ENCODE measurements at regions of chr3 and their contacts with region 1.

Region 1: DNA sequence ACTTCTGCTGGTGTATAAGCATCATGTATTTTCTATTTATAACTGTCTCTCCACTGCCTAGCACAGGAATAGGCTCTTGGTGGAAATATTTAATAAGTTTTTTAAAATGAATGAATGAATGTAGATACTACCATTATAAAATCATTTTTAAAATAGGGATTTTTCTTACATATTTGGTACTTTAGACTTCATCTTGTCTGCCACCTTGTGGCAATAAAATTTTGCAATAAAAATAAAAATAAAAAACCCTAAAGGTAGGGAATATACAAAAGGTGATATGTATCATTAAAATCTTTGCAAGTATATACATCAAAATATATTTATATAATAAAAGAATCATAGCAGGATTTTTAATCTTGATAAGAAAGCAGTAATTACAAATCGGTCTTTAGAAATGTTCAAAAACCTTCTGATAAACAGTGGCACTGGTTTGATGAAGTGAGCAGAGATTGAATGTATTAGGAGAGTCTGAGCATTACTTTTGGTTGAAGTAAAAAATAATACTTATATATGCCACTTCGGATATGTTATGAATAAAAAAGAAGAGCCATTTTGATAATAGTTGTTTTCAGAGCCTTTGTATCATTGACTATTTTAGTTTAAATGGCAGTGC is 95.2 kb downstream of the SPATA16 start:
- DNase-seq: no peak
- H3K4me3 ChIP-seq: no peak overlapping the region
- H3K27ac ChIP-seq: no peak overlapping the region
- H3K4me1 ChIP-seq: no peaks in the 10 kb centered on the region
- H3K27me3 ChIP-seq: no peaks in the 10 kb centered on the region
- CTCF ChIP-seq: peak in 2 of 4 experiments; percentile 15 to 18
- POLR2A ChIP-seq: no peak

Region 2: GRCh38 chr3:172836390-172836997 is 209.4 kb before region 1 on chr3:
- intact Hi-C with region 1: loop called (anchors 10 kb)
- DNase-seq: no peak
- H3K4me3 ChIP-seq: no peak overlapping the region
- H3K27ac ChIP-seq: no peak overlapping the region
- H3K4me1 ChIP-seq: no peaks in the 10 kb centered on the region
- H3K27me3 ChIP-seq: no peaks in the 10 kb centered on the region
- CTCF ChIP-seq: peak in 3 of 4 experiments; percentile 33 to 53 (median 48)
- POLR2A ChIP-seq: no peak

Region 3: GRCh38 chr3:172982736-172983364 is 63.0 kb before region 1 on chr3:
- intact Hi-C with region 1: no loop called
- DNase-seq: no peak
- H3K4me3 ChIP-seq: no peak overlapping the region
- H3K27ac ChIP-seq: no peak overlapping the region
- H3K4me1 ChIP-seq: no peaks in the 10 kb centered on the region
- H3K27me3 ChIP-seq: no peaks in the 10 kb centered on the region
- CTCF ChIP-seq: no peak
- POLR2A ChIP-seq: no peak